PC-3 (cell line): ENCODE measurements at regions of chr4 and their contacts with region 1.

Region 1: DNA sequence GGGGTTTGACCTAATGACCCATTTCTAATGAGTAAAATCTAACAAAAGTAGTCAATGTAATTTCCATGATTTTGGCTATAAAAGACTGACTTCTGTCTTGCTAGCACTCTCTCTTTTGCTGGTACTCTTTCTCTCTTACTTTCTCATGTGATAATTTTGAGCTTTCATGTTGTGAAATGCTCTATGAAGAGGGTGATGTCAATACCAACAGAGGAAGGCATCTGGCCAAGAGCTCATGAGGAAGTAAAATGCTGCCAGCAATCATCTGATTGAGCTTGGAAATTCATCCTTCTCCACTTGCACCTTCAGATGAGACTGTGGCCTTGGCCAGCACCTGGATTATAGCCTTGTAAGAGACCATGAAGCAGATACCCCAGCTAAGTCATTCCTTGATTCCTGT is 347.7 kb downstream of the HS3ST1 start:
- DNase-seq: no peak
- ATAC-seq: no peak
- H3K4me3 ChIP-seq: no peak overlapping the region
- H3K27ac ChIP-seq: no peak overlapping the region
- H3K4me1 ChIP-seq: no peaks in the 10 kb centered on the region
- H3K27me3 ChIP-seq: no peaks in the 10 kb centered on the region
- CTCF ChIP-seq: no peak

Region 2: GRCh38 chr4:10758906-10759305 is 322.1 kb before region 1 on chr4:
- CTCF ChIA-PET with region 1: no interaction called
- POLR2A ChIA-PET with region 1: no interaction called
- intact Hi-C with region 1: loop called (anchors 5 kb)
- DNase-seq: no peak
- ATAC-seq: no peak
- H3K4me3 ChIP-seq: no peak overlapping the region
- H3K27ac ChIP-seq: no peak overlapping the region
- H3K4me1 ChIP-seq: no peaks in the 10 kb centered on the region; the same call in 1 of the 2 replicates
- H3K27me3 ChIP-seq: no peaks in the 10 kb centered on the region
- CTCF ChIP-seq: no peak

Region 3: DNA sequence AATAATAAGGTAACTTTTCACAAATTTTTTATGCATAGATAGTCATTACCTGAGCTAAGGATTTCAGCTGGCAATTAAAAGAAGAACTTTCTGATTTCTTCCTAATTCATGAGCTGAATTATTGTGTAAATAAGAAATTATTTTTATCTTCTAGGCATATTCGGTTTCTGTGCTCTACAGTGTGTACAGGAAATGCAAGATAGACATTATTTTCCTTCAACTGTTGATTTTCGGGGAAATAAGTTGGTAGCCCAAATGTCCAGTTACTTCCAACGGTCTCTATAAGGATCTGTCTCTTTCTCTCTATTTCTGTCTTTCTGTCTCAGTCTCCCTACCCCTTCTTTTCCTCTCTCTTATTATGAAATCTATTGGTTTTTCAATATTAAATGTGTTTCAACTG is 259.2 kb before region 1 on chr4:
- CTCF ChIA-PET with region 1: no interaction called
- POLR2A ChIA-PET with region 1: no interaction called
- intact Hi-C with region 1: no loop called
- DNase-seq: no peak
- ATAC-seq: no peak
- H3K4me3 ChIP-seq: no peak overlapping the region
- H3K27ac ChIP-seq: no peak overlapping the region
- H3K4me1 ChIP-seq: no peaks in the 10 kb centered on the region
- H3K27me3 ChIP-seq: no peaks in the 10 kb centered on the region
- CTCF ChIP-seq: no peak

Region 4: GRCh38 chr4:11038926-11039325 is 42.1 kb before region 1 on chr4:
- CTCF ChIA-PET with region 1: no interaction called
- POLR2A ChIA-PET with region 1: no interaction called
- intact Hi-C with region 1: no loop called
- DNase-seq: no peak
- ATAC-seq: no peak
- H3K4me3 ChIP-seq: no peak overlapping the region
- H3K27ac ChIP-seq: no peak overlapping the region
- H3K4me1 ChIP-seq: no peaks in the 10 kb centered on the region
- H3K27me3 ChIP-seq: no peaks in the 10 kb centered on the region
- CTCF ChIP-seq: no peak